Common myeloid progenitor, CD34-positive (primary cell): ENCODE measurements at regions of chr1 and their contacts with region 1.

Region 1: GRCh38 chr1:161225534-161226319 is at the start of gene TOMM40L:
- DNase-seq: peak; percentile 100
- H3K4me3 ChIP-seq: peak within 1 kb of the TSS; percentile 60 to 99 (median 90)
- H3K27ac ChIP-seq: peak within 1 kb of the TSS in 1 of 2 experiments; percentile 67
- H3K4me1 ChIP-seq: peaks cover 2 to 33% (median 30%) of the 10 kb centered on the region in 4 experiments
- H3K27me3 ChIP-seq: no peaks in the 10 kb centered on the region

Region 2: DNA sequence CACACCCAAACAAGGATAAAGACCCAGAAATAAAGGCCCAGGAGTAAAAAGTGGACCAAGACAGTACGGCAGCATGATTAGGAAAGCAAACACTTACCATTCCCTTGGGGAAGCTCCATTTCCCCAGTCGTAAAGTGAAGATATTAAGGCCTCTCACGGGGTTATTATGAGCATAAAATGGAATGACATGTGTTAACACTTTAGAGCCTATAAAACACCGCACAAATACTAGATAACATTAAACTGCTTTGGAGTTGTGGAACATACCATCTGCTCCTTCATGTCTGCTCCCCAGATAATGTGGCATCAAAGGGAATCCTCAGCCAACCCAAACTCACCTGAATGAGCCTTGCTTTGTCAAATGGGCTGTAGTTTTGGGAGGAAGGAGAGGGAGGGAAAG is 262.2 kb before region 1 on chr1:
- CTCF ChIA-PET with region 1: no interaction called
- POLR2A ChIA-PET with region 1: no interaction called
- DNase-seq: no peak
- H3K4me3 ChIP-seq: no peak overlapping the region
- H3K27ac ChIP-seq: no peak overlapping the region
- H3K4me1 ChIP-seq: no peaks in the 10 kb centered on the region
- H3K27me3 ChIP-seq: no peaks in the 10 kb centered on the region

Region 3: GRCh38 chr1:161139765-161140164 is 86.0 kb before region 1 on chr1:
- CTCF ChIA-PET with region 1: no interaction called
- POLR2A ChIA-PET with region 1: no interaction called
- DNase-seq: peak; percentile 69 to 84 (median 74)
- H3K4me3 ChIP-seq: no peak overlapping the region
- H3K27ac ChIP-seq: no peak overlapping the region
- H3K4me1 ChIP-seq: peaks cover 0 to 12% (median 0%) of the 10 kb centered on the region in 4 experiments
- H3K27me3 ChIP-seq: no peaks in the 10 kb centered on the region

Region 4: DNA sequence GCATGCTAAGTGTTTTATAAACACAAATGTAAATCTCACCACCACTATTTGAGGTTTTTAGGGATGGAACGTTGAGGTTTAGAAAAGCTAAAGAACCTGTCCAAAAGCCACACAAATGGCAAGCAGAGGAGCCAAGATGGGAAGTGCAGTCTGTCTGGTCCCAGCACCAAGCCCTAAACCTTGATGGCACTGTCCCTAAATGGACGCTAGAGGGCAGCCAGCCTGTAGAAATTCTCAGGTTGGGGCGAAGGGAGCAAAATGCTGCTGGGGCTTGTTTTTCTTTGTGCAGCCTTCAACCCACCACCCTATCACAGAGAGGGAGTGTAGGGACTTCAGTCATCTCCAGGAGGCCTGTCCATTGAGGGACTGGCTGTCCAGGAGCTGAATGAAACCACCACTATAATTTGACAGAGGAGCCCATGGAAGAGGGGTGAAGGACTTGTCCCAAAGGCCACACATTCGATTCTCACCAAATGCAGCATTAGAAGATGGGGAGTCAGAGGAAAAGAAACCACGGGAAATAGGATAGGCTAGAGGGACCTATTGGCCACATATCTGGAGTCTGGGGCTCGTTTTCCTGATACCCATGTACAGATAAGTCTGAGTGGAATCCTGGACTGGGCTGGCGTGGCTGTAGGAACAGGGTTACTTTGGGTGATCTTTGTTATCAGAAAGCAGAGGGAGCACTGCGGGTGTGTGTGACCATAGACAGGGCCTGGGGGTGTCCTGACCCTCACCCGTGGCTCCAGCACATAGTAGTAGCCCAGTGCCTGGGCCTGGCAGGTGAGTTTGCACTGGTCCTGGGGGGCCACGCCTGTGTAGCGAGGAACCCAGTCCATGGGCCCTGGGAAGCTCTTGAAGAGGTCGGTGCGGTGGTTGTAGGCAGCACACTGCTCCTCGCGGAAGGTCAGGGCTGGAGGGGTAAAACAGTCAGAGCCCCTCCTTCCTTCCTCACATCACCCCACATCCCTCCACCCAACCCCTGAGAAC is 33.0 kb before region 1 on chr1:
- CTCF ChIA-PET with region 1: interaction called, 20 read pairs
- POLR2A ChIA-PET with region 1: no interaction called
- DNase-seq: peak; percentile 63 to 82 (median 79)
- H3K4me3 ChIP-seq: no peak overlapping the region
- H3K27ac ChIP-seq: no peak overlapping the region
- H3K4me1 ChIP-seq: peaks cover 3 to 15% (median 10%) of the 10 kb centered on the region in 4 experiments
- H3K27me3 ChIP-seq: no peaks in the 10 kb centered on the region

Region 5: GRCh38 chr1:161258439-161259344 is 33.0 kb after region 1 on chr1 and contains the start of gene PCP4L1:
- CTCF ChIA-PET with region 1: interaction called, 10 read pairs
- POLR2A ChIA-PET with region 1: no interaction called
- DNase-seq: peak; percentile 54 to 80 (median 79)
- H3K4me3 ChIP-seq: peak within 1 kb of the TSS; percentile 25 to 76 (median 55)
- H3K27ac ChIP-seq: no peak within 1 kb of the TSS
- H3K4me1 ChIP-seq: peaks cover 0 to 23% (median 9%) of the 10 kb centered on the region in 4 experiments
- H3K27me3 ChIP-seq: peaks cover 3 to 36% (median 32%) of the 10 kb centered on the region in 5 experiments

Region 6: GRCh38 chr1:161298116-161298515 is 72.4 kb after region 1 on chr1:
- CTCF ChIA-PET with region 1: interaction called, 137 read pairs
- POLR2A ChIA-PET with region 1: no interaction called
- DNase-seq: peak in 2 of 3 donors; percentile 28 to 37
- H3K4me3 ChIP-seq: no peak overlapping the region
- H3K27ac ChIP-seq: no peak overlapping the region
- H3K4me1 ChIP-seq: peaks cover 0 to 11% (median 4%) of the 10 kb centered on the region in 4 experiments
- H3K27me3 ChIP-seq: no peaks in the 10 kb centered on the region

Region 7: DNA sequence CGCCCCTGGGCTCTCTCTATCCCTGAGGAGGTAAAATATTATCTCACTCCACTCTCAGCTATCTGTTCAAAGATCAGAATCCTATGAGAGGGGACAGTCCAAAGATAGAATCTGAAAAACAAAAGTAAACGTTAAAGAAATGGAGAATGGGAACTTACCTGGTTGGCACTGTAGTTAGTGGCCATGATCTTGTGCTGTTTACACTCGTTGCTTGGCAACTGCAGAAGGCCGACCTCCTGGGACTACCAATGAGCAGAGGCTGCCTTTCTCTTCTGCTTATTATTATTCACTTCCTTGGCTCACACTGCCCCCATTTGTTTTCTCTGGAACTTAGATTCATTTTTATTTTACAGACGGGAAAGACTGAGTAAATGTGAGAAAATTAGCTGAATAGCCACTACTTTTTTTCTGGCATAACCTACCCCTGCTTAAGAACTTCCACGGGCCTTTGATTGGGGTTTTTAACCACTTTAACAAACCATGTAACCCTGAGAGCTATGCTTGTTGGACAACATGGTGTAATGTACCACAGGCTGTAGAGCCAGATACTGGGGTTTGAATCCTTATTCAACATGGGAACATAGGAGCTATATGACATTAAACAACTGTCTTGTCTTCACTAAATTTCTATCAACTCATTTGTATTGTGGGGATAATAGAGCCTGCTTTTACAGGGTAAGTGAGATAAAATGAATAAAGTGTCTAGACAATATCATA is 142.1 kb after region 1 on chr1 and contains the start of gene CFAP126:
- CTCF ChIA-PET with region 1: interaction called, 24 read pairs
- POLR2A ChIA-PET with region 1: no interaction called
- DNase-seq: peak; percentile 92 to 95 (median 94)
- H3K4me3 ChIP-seq: peak within 1 kb of the TSS in 3 of 7 experiments; percentile 23 to 51 (median 41)
- H3K27ac ChIP-seq: peak within 1 kb of the TSS; percentile 81 to 94
- H3K4me1 ChIP-seq: peaks cover 0 to 8% (median 2%) of the 10 kb centered on the region in 4 experiments
- H3K27me3 ChIP-seq: no peaks in the 10 kb centered on the region

Region 8: DNA sequence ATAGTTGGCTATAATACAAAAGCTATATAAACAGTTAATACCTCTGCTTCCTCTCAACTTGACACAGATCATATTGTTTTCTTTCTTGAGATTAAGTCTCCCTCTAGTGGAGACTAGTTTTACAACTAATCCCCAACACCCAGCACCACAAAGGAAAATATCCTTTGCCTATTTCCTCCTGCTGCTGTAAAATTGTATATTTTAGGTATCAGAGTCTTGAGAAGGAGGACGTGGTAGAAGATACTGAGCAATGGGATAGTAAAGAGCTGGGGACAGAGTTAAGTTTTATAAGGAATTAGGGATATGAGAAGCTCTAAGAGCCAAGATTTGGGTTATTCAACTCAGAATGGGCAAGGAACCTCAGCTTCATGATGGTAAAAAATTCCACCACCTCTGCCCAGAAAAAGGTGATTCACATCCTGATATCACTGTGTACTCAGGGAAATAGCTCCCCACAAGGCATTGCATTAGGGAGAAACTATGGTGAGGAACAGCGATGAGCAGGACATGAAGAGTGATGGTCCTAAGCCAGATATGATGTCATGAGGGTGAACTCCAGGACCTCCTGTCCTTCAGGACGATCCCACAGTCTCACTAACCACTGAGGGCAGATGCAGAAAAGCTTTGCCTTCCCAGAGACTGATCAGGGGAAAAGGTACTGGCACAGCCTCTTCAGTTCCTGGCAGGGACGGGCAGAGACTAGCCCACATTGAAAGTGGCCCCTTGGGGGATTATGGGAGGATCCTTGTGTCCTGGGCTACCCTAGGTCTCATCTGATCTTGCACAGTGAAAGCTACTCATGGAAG is 156.7 kb after region 1 on chr1:
- CTCF ChIA-PET with region 1: interaction called, 51 read pairs
- POLR2A ChIA-PET with region 1: no interaction called
- DNase-seq: peak; percentile 58 to 75 (median 71)
- H3K4me3 ChIP-seq: no peak overlapping the region
- H3K27ac ChIP-seq: no peak overlapping the region
- H3K4me1 ChIP-seq: peaks cover 0 to 5% (median 4%) of the 10 kb centered on the region in 4 experiments
- H3K27me3 ChIP-seq: no peaks in the 10 kb centered on the region